Activated naive CD8-positive, alpha-beta T cell treated with anti-CD3 and anti-CD28 coated beads, Interleukin-2, amount 10 ng/mL, durations not matched to agents 7 days and 5 days (primary cell): ENCODE measurements at regions of chr3 and their contacts with region 1.

Region 1: GRCh38 chr3:88031642-88032077 is 27.1 kb downstream of the CGGBP1 start:
- DNase-seq: no peak
- ATAC-seq: peak; percentile 93
- H3K4me3 Mint-ChIP-seq: peak overlapping the region; percentile 95
- H3K27ac Mint-ChIP-seq: peak overlapping the region; percentile 96
- H3K4me1 Mint-ChIP-seq: peaks cover 22% of the 10 kb centered on the region
- H3K27me3 Mint-ChIP-seq: no peaks in the 10 kb centered on the region

Region 2: GRCh38 chr3:88058591-88059368 is 27.1 kb after region 1 on chr3 and contains the starts of genes CGGBP1 and ZNF654:
- POLR2A ChIA-PET with region 1: interaction called, 25 read pairs
- DNase-seq: peak; percentile 96
- ATAC-seq: peak; percentile 96
- H3K4me3 Mint-ChIP-seq: peak within 1 kb of the TSS; percentile 97
- H3K27ac Mint-ChIP-seq: peak within 1 kb of the TSS; percentile 94
- H3K4me1 Mint-ChIP-seq: peaks cover 28% of the 10 kb centered on the region
- H3K27me3 Mint-ChIP-seq: no peaks in the 10 kb centered on the region
- total RNA-seq, gene CGGBP1: 106 to 111 TPM
- total RNA-seq, gene ZNF654: 23.4 to 27.5 TPM

Region 3: DNA sequence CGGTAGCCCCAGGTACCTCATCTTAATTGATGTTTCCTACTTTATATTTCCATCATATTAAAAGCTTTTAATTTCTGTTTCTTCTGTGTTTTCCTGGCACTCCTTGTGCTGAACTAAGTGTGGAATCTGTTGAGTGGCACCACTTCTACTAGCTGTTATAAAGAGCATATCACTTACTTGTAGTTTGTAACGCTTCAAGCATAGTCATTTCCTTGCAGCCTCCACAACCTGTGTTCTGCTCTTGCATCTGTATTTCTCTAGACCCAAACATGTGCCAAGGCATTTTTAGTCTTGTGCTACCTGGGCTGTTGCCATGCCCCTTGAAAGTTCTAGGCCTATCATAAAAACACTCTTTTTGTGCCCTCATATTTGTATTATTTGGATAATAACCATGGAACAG is 43.4 kb after region 1 on chr3:
- POLR2A ChIA-PET with region 1: no interaction called
- DNase-seq: no peak
- ATAC-seq: no peak
- H3K4me3 Mint-ChIP-seq: no peak overlapping the region
- H3K27ac Mint-ChIP-seq: no peak overlapping the region
- H3K4me1 Mint-ChIP-seq: peaks cover 13% of the 10 kb centered on the region
- H3K27me3 Mint-ChIP-seq: no peaks in the 10 kb centered on the region

Region 4: DNA sequence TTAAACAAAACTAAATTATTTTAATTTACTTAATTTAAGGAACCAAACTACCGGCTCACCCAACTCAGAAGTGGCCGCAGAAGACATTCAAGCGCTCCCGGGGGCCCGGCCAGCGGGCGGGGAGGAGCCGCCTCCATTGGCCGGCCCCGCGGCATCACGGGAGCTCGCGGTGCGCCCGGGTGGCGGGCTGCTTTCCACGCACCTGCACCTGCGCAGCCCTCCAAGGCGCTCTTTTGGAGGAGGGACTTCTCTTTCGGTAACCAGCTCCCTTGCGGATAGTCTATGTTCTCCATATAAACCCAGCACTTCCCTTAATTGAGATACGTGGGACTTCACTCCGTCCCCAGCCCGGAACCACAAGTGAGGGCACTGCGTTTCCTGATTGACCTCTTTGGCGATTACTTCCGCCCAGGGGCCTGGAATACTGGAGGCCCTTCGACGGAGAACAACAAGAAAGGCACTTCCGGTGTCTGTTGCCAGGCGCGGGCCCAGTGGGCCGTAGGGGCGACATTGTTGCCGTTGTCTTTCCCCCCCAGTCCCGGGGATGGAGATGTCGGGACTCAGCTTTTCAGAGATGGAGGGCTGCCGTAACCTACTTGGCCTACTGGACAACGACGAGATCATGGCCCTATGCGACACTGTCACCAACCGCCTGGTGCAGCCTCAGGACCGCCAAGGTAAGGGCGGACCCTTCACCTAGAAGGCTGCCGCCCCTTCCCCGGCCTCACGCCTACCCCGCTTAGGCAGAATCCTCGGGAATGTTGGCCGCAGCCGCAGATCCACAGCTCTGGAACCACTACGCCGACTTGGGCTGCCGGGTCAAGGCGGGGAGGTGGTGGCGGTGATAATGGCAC is 118.1 kb after region 1 on chr3 and contains the start of gene C3orf38:
- POLR2A ChIA-PET with region 1: interaction called, 18 read pairs
- DNase-seq: peak; percentile 89
- ATAC-seq: peak; percentile 93
- H3K4me3 Mint-ChIP-seq: peak within 1 kb of the TSS; percentile 96
- H3K27ac Mint-ChIP-seq: peak within 1 kb of the TSS; percentile 98
- H3K4me1 Mint-ChIP-seq: peaks cover 28% of the 10 kb centered on the region
- H3K27me3 Mint-ChIP-seq: no peaks in the 10 kb centered on the region
- total RNA-seq, gene C3orf38: 33.2 to 35.2 TPM